Cardiac septum (tissue), 1 donor: ENCODE measurements at regions of chr9 and their contacts with region 1.

Region 1: GRCh38 chr9:109843641-109844040 is 63.6 kb downstream of the PALM2AKAP2 start:
- DNase-seq: peak; percentile 91

Region 2: DNA sequence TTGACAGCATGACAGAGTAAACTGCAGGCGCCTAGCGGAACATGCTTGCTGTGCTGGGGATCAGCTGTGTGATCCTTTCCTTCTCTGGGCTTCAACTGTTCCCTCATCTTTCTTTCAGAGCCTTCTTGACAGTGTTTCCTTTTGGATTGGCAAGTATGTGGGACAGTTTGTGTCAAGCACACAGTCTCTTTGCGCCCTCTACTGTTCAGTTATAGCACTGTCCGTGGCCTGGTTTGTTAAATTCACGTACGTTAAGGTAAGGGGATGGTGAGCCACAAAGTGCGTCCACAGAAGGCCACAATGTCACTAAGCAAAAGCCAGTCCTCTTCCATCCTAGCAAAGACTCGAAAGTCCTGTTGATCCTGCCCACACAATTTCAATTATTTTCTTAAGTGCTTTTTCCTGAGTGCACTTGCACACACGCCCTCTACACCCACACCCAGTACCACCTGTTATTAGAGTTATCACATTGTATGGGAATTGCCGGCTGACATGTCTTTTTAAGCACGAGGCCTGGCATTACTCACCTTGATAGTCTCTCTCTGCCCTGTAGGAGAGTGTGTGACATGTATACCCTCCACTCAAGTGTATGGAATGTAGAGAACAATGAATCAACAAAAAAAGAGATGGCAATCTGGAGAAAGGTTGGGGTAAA is 323.0 kb before region 1 on chr9:
- intact Hi-C with region 1: no loop called
- DNase-seq: no peak

Region 3: GRCh38 chr9:109828254-109828653 is 15.4 kb before region 1 on chr9:
- intact Hi-C with region 1: loop called (anchors 2 kb)
- DNase-seq: no peak

Region 4: GRCh38 chr9:109859433-109859832 is 15.8 kb after region 1 on chr9:
- intact Hi-C with region 1: no loop called
- DNase-seq: no peak